ENCODE measurements at regions of chr7 and their contacts with region 1.

Region 1: GRCh38 chr7:50418086-50418515 is 32.0 kb downstream of the FIGNL1 start:
- DNase-seq: no peak
- ATAC-seq: peak; percentile 96
- H3K4me3 ChIP-seq: no peak overlapping the region
- H3K27ac ChIP-seq: no peak overlapping the region
- H3K4me1 ChIP-seq: peaks cover 22% of the 10 kb centered on the region
- H3K27me3 ChIP-seq: no peaks in the 10 kb centered on the region
- CTCF ChIP-seq: peak; percentile 98 to 99 (median 99); a peak in 5 of 6 replicates
- EP300 ChIP-seq: no peak
- POLR2A ChIP-seq: no peak
- RAD21 ChIP-seq: peak; percentile 98

Region 2: GRCh38 chr7:50092579-50093491 is 325.3 kb before region 1 on chr7 and contains the start of gene ZPBP:
- CTCF ChIA-PET with region 1: interaction called, 42 read pairs
- POLR2A ChIA-PET with region 1: no interaction called
- RAD21 ChIA-PET with region 1: interaction called, 13 read pairs
- SMC1A ChIA-PET with region 1: interaction called, 10 read pairs
- in situ Hi-C with region 1: no loop called
- intact Hi-C with region 1: loop called (anchors 2 kb)
- DNase-seq: peak; percentile 30
- ATAC-seq: peak; percentile 77
- H3K4me3 ChIP-seq: peak within 1 kb of the TSS; percentile 38; the same call in 1 of the 2 replicates
- H3K27ac ChIP-seq: no peak within 1 kb of the TSS
- H3K4me1 ChIP-seq: no peaks in the 10 kb centered on the region
- H3K27me3 ChIP-seq: no peaks in the 10 kb centered on the region
- CTCF ChIP-seq: peak; percentile 54 to 72 (median 68); a peak in 5 of 6 replicates
- EP300 ChIP-seq: no peak
- POLR2A ChIP-seq: peak; percentile 58
- RAD21 ChIP-seq: peak; percentile 95
- polyA plus RNA-seq, gene ZPBP: not detected

Region 3: DNA sequence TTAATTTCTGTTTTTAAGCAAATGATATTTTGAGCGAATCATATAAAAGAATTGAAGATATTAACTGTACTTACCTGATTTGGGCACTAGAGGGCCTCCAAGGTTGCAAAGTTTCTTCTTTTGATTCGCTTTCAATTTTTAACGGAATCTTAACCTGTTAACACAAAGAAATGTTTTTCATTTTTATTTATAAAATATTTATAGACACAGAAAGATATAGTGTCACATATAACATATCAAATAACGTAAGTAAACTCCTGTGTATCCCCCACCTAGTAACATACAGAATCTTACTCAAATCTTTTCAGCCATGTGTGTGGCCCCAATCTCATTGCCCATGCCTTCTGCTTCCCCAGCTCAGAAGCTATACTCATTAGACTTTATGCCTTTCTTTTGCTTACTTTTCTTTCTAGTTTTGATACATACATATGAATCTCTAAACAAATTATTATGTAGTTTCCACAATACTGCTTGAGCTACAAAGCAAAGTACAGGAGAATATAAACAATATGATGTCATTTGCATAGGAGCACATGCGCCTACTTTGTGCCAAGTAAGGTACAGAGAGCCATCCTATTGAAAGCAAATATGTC is 275.6 kb before region 1 on chr7:
- CTCF ChIA-PET with region 1: interaction called, 183 read pairs
- POLR2A ChIA-PET with region 1: interaction called, 4 read pairs
- RAD21 ChIA-PET with region 1: interaction called, 92 read pairs
- SMC1A ChIA-PET with region 1: interaction called, 92 read pairs
- in situ Hi-C with region 1: no loop called
- intact Hi-C with region 1: loop called (anchors 1 kb)
- DNase-seq: peak; percentile 24
- ATAC-seq: peak; percentile 51
- H3K4me3 ChIP-seq: no peak overlapping the region
- H3K27ac ChIP-seq: no peak overlapping the region
- H3K4me1 ChIP-seq: peaks cover 24% of the 10 kb centered on the region
- H3K27me3 ChIP-seq: no peaks in the 10 kb centered on the region; a peak in 1 of 4 replicates
- CTCF ChIP-seq: peak; percentile 55 to 61 (median 60)
- EP300 ChIP-seq: no peak
- POLR2A ChIP-seq: no peak
- RAD21 ChIP-seq: peak; percentile 85

Region 4: GRCh38 chr7:50212666-50213621 is 205.2 kb before region 1 on chr7:
- CTCF ChIA-PET with region 1: interaction called, 257 read pairs
- POLR2A ChIA-PET with region 1: no interaction called
- RAD21 ChIA-PET with region 1: interaction called, 77 read pairs
- SMC1A ChIA-PET with region 1: interaction called, 122 read pairs
- in situ Hi-C with region 1: loop called (anchors 10 kb)
- intact Hi-C with region 1: no loop called
- DNase-seq: no peak
- ATAC-seq: peak; percentile 70
- H3K4me3 ChIP-seq: no peak overlapping the region
- H3K27ac ChIP-seq: no peak overlapping the region
- H3K4me1 ChIP-seq: peaks cover 9% of the 10 kb centered on the region
- H3K27me3 ChIP-seq: no peaks in the 10 kb centered on the region
- CTCF ChIP-seq: peak; percentile 20 to 47 (median 25); a peak in 3 of 6 replicates
- EP300 ChIP-seq: 0 out of 4 replicates have a peak, but pooled peaks of 1 of the 2 experiments have one; percentile 11
- POLR2A ChIP-seq: no peak
- RAD21 ChIP-seq: peak; percentile 61

Region 5: GRCh38 chr7:50272808-50273207 is 145.3 kb before region 1 on chr7:
- CTCF ChIA-PET with region 1: interaction called, 23 read pairs
- POLR2A ChIA-PET with region 1: interaction called, 4 read pairs
- RAD21 ChIA-PET with region 1: interaction called, 8 read pairs
- SMC1A ChIA-PET with region 1: interaction called, 23 read pairs
- in situ Hi-C with region 1: no loop called
- intact Hi-C with region 1: no loop called
- DNase-seq: no peak
- ATAC-seq: peak; percentile 47
- H3K4me3 ChIP-seq: no peak overlapping the region
- H3K27ac ChIP-seq: no peak overlapping the region
- H3K4me1 ChIP-seq: peaks cover 76% of the 10 kb centered on the region
- H3K27me3 ChIP-seq: no peaks in the 10 kb centered on the region
- CTCF ChIP-seq: no peak
- EP300 ChIP-seq: no peak
- POLR2A ChIP-seq: no peak
- RAD21 ChIP-seq: no peak

Region 6: DNA sequence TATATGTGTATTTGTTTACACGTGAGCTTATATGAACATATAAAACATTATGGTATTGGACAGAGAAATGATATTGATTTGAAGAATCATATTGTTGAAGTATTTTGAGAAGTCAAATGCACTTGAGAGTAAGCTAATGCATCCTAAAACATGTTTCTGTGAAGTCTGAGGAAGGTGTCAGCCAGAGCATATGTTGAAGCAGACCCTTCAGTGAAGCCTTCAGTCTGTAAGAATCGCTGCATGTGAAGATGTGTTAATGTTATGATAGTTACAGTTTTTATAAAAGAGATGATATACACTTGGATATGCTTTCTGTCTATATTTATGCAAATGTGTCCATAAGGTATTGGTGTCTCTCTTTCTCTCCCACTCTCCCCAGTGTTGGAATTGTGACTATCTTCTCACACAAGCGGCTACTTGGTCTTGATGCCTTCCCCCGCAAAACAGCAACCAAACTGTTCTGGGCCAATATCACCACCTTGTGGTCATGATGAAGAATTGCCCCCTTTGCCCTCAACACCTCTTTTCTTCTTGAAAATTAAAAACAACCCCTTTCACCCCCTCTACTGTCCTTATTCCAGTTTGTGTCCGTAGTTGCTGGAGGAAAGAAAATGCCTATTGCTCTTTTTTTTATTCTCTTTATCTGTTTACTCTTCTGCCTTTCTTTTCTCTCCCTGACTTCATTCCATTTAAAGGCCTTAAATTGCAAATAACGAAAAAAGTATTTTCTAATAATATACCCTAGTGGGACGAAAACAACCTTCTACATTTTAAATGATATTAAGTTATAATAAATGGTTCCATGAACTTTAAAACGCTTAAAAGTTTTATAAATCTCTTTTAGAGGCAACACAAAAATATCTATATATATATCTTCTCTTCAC is 48.7 kb before region 1 on chr7:
- CTCF ChIA-PET with region 1: interaction called, 50 read pairs
- POLR2A ChIA-PET with region 1: no interaction called
- RAD21 ChIA-PET with region 1: interaction called, 26 read pairs
- SMC1A ChIA-PET with region 1: interaction called, 63 read pairs
- in situ Hi-C with region 1: no loop called
- intact Hi-C with region 1: loop called (anchors 2 kb)
- DNase-seq: peak; percentile 51
- ATAC-seq: peak; percentile 77
- H3K4me3 ChIP-seq: no peak overlapping the region
- H3K27ac ChIP-seq: peak overlapping the region; percentile 17; the same call in 1 of the 2 replicates
- H3K4me1 ChIP-seq: peaks cover 23% of the 10 kb centered on the region
- H3K27me3 ChIP-seq: no peaks in the 10 kb centered on the region
- CTCF ChIP-seq: peak; percentile 70 to 82 (median 81)
- EP300 ChIP-seq: no peak
- POLR2A ChIP-seq: no peak
- RAD21 ChIP-seq: peak; percentile 96

Region 7: DNA sequence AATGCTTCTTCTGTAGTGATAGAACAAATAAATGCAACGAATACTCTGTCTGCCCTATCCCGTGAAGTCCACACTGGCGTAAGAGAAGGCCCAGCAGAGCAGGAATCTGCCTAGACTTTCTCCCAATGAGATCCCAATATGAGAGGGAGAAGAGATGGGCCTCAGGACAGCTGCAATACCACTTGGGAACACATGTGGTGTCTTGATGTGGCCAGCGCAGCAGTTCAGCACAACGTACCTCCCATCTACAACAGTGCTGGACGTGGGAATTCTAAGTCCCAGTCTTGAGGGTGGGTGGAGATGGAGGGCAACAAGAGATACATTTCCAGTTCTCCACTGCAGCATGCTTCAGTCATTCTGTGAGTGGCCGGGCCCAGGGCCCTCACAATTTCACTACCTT is 13.7 kb before region 1 on chr7:
- CTCF ChIA-PET with region 1: interaction called, 21 read pairs
- POLR2A ChIA-PET with region 1: no interaction called
- RAD21 ChIA-PET with region 1: interaction called, 4 read pairs
- SMC1A ChIA-PET with region 1: interaction called, 28 read pairs
- in situ Hi-C with region 1: no loop called
- intact Hi-C with region 1: loop called (anchors 1 kb)
- DNase-seq: no peak
- ATAC-seq: 0 out of 3 replicates have a peak, but pooled peaks have one; percentile 17
- H3K4me3 ChIP-seq: no peak overlapping the region
- H3K27ac ChIP-seq: no peak overlapping the region
- H3K4me1 ChIP-seq: peaks cover 45% of the 10 kb centered on the region
- H3K27me3 ChIP-seq: no peaks in the 10 kb centered on the region
- CTCF ChIP-seq: peak in 2 of 3 experiments; percentile 23 to 26; a peak in 2 of 6 replicates
- EP300 ChIP-seq: no peak
- POLR2A ChIP-seq: no peak
- RAD21 ChIP-seq: no peak

Measured in GM12878 (cell line).